MCF 10A (cell line): ENCODE measurements at regions of chr5 and their contacts with region 1.

Region 1: DNA sequence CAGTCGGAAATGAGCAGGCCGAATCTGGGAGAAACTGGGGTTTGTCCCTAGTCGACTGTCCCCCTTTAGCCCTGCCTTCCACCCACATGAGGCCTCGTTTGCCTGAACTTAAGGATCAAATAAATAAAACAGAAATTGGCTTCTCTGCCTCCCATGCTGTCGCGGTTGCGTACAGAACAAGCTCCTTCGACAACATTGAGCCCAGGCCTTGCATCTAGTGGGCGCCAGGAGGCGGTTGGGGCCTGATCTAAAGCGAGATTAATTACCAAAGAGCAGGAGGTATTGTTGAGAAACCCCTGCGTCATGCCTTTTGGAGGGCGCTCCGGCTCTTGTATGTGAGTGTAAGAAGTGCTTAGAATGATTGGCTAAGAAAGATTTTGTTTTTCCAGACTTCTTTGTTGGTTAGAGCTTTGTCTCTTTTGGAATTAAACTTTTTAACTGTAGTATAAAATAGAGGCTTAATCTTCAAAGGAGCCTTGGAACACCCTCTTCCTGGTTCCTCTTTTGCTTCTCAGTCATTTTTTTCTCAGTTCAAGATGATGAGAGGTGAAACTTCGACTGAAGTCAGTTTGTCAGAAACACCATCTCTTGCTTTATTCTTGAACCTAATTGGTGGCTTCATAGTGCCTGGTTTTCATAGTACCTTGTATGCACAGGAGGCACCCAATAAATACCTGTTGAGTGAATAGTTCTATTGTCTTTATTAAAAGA is 827 bp downstream of the ATP6V0E1 start:
- DNase-seq: peak; percentile 96
- H3K4me3 Mint-ChIP-seq: peak overlapping the region; percentile 94
- H3K27ac Mint-ChIP-seq: peak overlapping the region; percentile 91
- H3K4me1 Mint-ChIP-seq: peaks cover 6% of the 10 kb centered on the region
- H3K27me3 Mint-ChIP-seq: no peaks in the 10 kb centered on the region
- CTCF ChIP-seq: peak; percentile 43

Region 2: GRCh38 chr5:172902497-172903200 is 81.7 kb before region 1 on chr5:
- CTCF ChIA-PET with region 1: no interaction called
- POLR2A ChIA-PET with region 1: interaction called, 11 read pairs
- intact Hi-C with region 1: no loop called
- DNase-seq: peak; percentile 75
- H3K4me3 Mint-ChIP-seq: peak overlapping the region; percentile 45
- H3K27ac Mint-ChIP-seq: peak overlapping the region; percentile 98
- H3K4me1 Mint-ChIP-seq: peaks cover 82% of the 10 kb centered on the region
- H3K27me3 Mint-ChIP-seq: no peaks in the 10 kb centered on the region
- CTCF ChIP-seq: peak; percentile 27

Region 3: DNA sequence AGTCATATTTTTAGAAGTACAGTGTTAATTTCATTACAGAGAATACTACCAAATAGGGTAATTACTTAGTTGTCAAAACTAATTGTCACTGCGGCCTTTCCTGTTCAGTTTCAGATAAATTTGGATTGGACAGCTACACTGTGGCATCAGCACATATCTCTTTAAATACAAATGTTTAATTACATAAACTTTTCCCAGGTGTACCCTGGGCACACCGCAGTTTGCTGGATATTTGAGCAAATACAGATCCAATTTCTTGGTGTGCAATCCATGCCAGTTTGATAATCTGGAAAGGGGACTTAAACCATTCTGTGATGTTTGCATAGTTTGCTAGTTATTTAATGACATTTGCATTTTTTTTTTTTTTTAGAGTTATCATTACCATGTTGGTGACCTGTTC is 10.0 kb after region 1 on chr5:
- CTCF ChIA-PET with region 1: interaction called, 12 read pairs
- POLR2A ChIA-PET with region 1: interaction called, 41 read pairs
- intact Hi-C with region 1: no loop called
- DNase-seq: no peak
- H3K4me3 Mint-ChIP-seq: no peak overlapping the region
- H3K27ac Mint-ChIP-seq: no peak overlapping the region
- H3K4me1 Mint-ChIP-seq: peaks cover 26% of the 10 kb centered on the region
- H3K27me3 Mint-ChIP-seq: no peaks in the 10 kb centered on the region
- CTCF ChIP-seq: no peak

Region 4: DNA sequence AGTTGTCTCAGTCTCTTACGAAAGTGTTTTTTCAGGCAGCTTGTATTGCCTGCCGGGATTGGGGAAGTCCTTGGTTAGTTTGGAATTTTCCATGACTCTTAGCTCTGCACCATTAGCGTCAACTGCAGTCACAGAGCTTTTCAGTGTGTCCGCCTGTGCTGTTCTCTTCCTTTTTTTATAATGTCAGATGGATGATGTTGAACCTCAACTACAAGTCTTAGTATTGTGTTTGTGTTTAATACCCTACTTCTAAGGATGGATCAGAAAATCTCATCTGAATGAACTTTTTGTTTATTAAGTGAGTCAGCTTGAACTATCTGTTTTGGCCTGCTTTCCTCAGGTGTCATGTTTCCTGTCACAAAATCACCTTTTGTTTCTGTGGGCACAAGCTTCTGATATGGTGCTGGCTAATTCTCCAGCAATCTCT is 32.2 kb after region 1 on chr5:
- CTCF ChIA-PET with region 1: interaction called, 5 read pairs
- POLR2A ChIA-PET with region 1: interaction called, 36 read pairs
- intact Hi-C with region 1: no loop called
- DNase-seq: peak; percentile 70
- H3K4me3 Mint-ChIP-seq: peak overlapping the region; percentile 35
- H3K27ac Mint-ChIP-seq: peak overlapping the region; percentile 89
- H3K4me1 Mint-ChIP-seq: peaks cover 52% of the 10 kb centered on the region
- H3K27me3 Mint-ChIP-seq: no peaks in the 10 kb centered on the region
- CTCF ChIP-seq: no peak

Region 5: DNA sequence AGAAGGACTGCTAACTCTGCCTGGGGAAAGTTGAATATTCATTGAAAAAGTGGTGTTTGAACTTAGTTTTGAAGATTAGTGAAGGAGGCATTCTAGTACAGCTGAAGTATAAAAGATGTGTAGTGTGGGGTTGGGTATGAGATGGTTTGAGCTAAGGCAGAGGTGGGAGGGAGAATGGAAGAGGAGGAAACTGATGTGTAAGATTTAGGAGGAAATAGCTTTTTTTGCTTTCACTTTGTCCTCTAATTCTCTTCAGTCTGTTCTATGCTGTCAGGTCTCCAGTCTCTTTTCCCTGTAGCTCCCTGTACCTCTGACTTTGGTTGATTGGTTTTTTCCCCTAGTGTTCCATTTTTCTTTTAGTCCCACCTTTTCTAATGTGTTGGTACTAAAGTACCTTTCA is 80.8 kb after region 1 on chr5:
- CTCF ChIA-PET with region 1: interaction called, 5 read pairs
- POLR2A ChIA-PET with region 1: interaction called, 97 read pairs
- intact Hi-C with region 1: no loop called
- DNase-seq: no peak
- H3K4me3 Mint-ChIP-seq: no peak overlapping the region
- H3K27ac Mint-ChIP-seq: no peak overlapping the region
- H3K4me1 Mint-ChIP-seq: peaks cover 21% of the 10 kb centered on the region
- H3K27me3 Mint-ChIP-seq: no peaks in the 10 kb centered on the region
- CTCF ChIP-seq: no peak

Region 6: GRCh38 chr5:173204185-173204979 is 220.0 kb after region 1 on chr5:
- CTCF ChIA-PET with region 1: interaction called, 6 read pairs
- POLR2A ChIA-PET with region 1: interaction called, 21 read pairs
- intact Hi-C with region 1: loop called (anchors 1 kb)
- DNase-seq: peak; percentile 67
- H3K4me3 Mint-ChIP-seq: no peak overlapping the region
- H3K27ac Mint-ChIP-seq: no peak overlapping the region
- H3K4me1 Mint-ChIP-seq: peaks cover 26% of the 10 kb centered on the region
- H3K27me3 Mint-ChIP-seq: peaks cover 33% of the 10 kb centered on the region
- CTCF ChIP-seq: peak; percentile 66